ENCODE measurements at regions of chr3 and their contacts with region 1.

Region 1: DNA sequence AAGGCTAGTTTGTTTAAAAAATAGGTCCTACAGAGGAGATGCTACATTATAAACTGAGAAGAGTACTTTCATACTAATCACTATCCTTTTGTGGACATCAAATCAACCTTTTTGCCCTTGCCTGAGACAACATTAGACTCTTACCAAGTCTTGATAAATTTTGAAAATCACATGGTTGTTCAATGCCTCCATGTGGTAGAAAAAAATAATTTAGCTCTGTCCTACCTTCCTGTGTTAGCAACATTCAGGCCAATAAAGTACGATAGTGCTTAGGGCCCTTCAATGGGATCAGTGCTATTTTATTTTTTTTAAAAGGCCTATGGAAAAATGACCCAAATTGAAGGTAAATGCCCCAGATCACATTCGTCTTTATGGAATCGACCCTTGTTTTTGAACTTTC is 5.0 kb upstream of the UBE2E1 start:
- DNase-seq: peak in 1 of 14 experiments; percentile 8
- ATAC-seq: no peak
- H3K4me3 ChIP-seq: no peak overlapping the region
- H3K4me3 Mint-ChIP-seq: no peak overlapping the region
- H3K27ac ChIP-seq: no peak overlapping the region
- H3K27ac Mint-ChIP-seq: no peak overlapping the region
- H3K4me1 ChIP-seq: peaks cover 4% of the 10 kb centered on the region
- H3K4me1 Mint-ChIP-seq: peaks cover 7% of the 10 kb centered on the region
- H3K27me3 ChIP-seq: no peaks in the 10 kb centered on the region
- H3K27me3 Mint-ChIP-seq: no peaks in the 10 kb centered on the region
- CTCF ChIP-seq: no peak

Region 2: GRCh38 chr3:23202921-23203707 is 597.6 kb before region 1 on chr3 and contains the start of gene UBE2E2:
- CTCF ChIA-PET with region 1: interaction called, 3 read pairs
- POLR2A ChIA-PET with region 1: no interaction called
- intact Hi-C with region 1: loop called in 1 of 2 experiments (anchors 5 kb)
- DNase-seq: peak; percentile 17 to 82 (median 45)
- ATAC-seq: peak; percentile 66
- H3K4me3 ChIP-seq: peak within 1 kb of the TSS; percentile 73
- H3K4me3 Mint-ChIP-seq: peak within 1 kb of the TSS; percentile 97
- H3K27ac ChIP-seq: peak within 1 kb of the TSS in 1 of 2 donors; percentile 18
- H3K27ac Mint-ChIP-seq: peak within 1 kb of the TSS; percentile 86
- H3K4me1 ChIP-seq: peaks cover 10% of the 10 kb centered on the region
- H3K4me1 Mint-ChIP-seq: peaks cover 33% of the 10 kb centered on the region
- H3K27me3 ChIP-seq: peaks cover 0 to 2% of the 10 kb centered on the region in 2 experiments
- H3K27me3 Mint-ChIP-seq: peaks cover 15% of the 10 kb centered on the region
- CTCF ChIP-seq: no peak
- total RNA-seq, gene UBE2E2: 14.1 to 20.2 TPM

Region 3: GRCh38 chr3:23785882-23786281 is 14.8 kb before region 1 on chr3:
- CTCF ChIA-PET with region 1: no interaction called
- POLR2A ChIA-PET with region 1: no interaction called
- intact Hi-C with region 1: no loop called
- DNase-seq: no peak
- ATAC-seq: no peak
- H3K4me3 ChIP-seq: no peak overlapping the region
- H3K4me3 Mint-ChIP-seq: no peak overlapping the region
- H3K27ac ChIP-seq: no peak overlapping the region
- H3K27ac Mint-ChIP-seq: no peak overlapping the region
- H3K4me1 ChIP-seq: no peaks in the 10 kb centered on the region
- H3K4me1 Mint-ChIP-seq: no peaks in the 10 kb centered on the region
- H3K27me3 ChIP-seq: no peaks in the 10 kb centered on the region
- H3K27me3 Mint-ChIP-seq: peaks cover 3% of the 10 kb centered on the region
- CTCF ChIP-seq: no peak

Region 4: GRCh38 chr3:23819599-23820360 is 19.0 kb after region 1 on chr3:
- CTCF ChIA-PET with region 1: no interaction called
- POLR2A ChIA-PET with region 1: no interaction called
- intact Hi-C with region 1: no loop called
- DNase-seq: no peak
- ATAC-seq: no peak
- H3K4me3 ChIP-seq: no peak overlapping the region
- H3K4me3 Mint-ChIP-seq: no peak overlapping the region
- H3K27ac ChIP-seq: no peak overlapping the region
- H3K27ac Mint-ChIP-seq: no peak overlapping the region
- H3K4me1 ChIP-seq: peaks cover 4% of the 10 kb centered on the region
- H3K4me1 Mint-ChIP-seq: peaks cover 80% of the 10 kb centered on the region
- H3K27me3 ChIP-seq: no peaks in the 10 kb centered on the region
- H3K27me3 Mint-ChIP-seq: no peaks in the 10 kb centered on the region
- CTCF ChIP-seq: no peak

Region 5: DNA sequence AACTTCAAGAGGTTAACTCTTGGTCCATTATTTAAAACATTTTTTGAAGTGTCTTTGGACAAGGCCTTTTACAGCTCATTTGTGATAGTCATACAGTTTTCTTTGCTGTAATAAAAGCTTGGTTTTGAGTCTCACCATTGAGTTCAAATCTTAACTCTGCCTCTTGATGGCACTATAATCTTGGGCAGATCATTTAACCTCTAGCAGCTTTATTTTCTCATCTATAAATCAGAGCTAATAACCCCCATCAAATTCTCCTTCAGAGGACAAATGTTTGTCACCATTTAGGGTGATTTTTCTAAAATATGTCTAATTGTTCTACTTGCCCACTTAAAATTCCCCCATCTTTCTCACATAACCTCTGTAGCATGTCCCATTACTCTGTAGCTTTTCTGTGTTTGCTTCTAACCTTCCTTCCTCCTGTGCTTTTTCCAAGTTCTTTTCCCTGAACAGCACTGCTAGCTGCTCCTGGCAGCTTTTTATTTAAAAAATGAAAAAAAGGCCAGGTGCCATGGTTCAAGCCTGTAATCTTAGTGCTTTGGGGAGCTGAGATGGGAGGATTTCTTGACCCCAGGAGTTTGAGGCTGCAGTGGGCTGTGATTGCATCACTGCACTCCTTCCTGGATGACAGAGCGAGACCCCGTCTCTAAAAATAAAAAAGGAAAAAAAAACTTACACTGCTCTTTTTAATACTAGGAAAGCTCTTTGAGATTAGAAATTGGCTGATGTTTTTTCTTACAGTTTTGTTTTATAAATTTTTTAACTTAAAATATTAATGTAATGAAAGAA is 33.5 kb after region 1 on chr3:
- CTCF ChIA-PET with region 1: no interaction called
- POLR2A ChIA-PET with region 1: no interaction called
- intact Hi-C with region 1: no loop called
- DNase-seq: peak in 1 of 14 experiments; percentile 4
- ATAC-seq: no peak
- H3K4me3 ChIP-seq: no peak overlapping the region
- H3K4me3 Mint-ChIP-seq: no peak overlapping the region
- H3K27ac ChIP-seq: no peak overlapping the region
- H3K27ac Mint-ChIP-seq: no peak overlapping the region
- H3K4me1 ChIP-seq: peaks cover 13% of the 10 kb centered on the region
- H3K4me1 Mint-ChIP-seq: peaks cover 64% of the 10 kb centered on the region
- H3K27me3 ChIP-seq: no peaks in the 10 kb centered on the region
- H3K27me3 Mint-ChIP-seq: no peaks in the 10 kb centered on the region
- CTCF ChIP-seq: no peak